ENCODE measurements at regions of chr3 and their contacts with region 1.

Region 1: GRCh38 chr3:31132132-31132769 is 237.8 kb upstream of the GADL1 start:
- DNase-seq: no peak
- H3K4me3 Mint-ChIP-seq: no peak overlapping the region
- H3K27ac Mint-ChIP-seq: no peak overlapping the region
- H3K4me1 Mint-ChIP-seq: peaks cover 3% of the 10 kb centered on the region
- H3K27me3 Mint-ChIP-seq: peaks cover 6% of the 10 kb centered on the region

Region 2: GRCh38 chr3:30768703-30769685 is 363.3 kb before region 1 on chr3:
- intact Hi-C with region 1: loop called (anchors 1 kb)
- DNase-seq: peak; percentile 44
- H3K4me3 Mint-ChIP-seq: no peak overlapping the region
- H3K27ac Mint-ChIP-seq: no peak overlapping the region
- H3K4me1 Mint-ChIP-seq: peaks cover 5% of the 10 kb centered on the region
- H3K27me3 Mint-ChIP-seq: peaks cover 40% of the 10 kb centered on the region

Region 3: DNA sequence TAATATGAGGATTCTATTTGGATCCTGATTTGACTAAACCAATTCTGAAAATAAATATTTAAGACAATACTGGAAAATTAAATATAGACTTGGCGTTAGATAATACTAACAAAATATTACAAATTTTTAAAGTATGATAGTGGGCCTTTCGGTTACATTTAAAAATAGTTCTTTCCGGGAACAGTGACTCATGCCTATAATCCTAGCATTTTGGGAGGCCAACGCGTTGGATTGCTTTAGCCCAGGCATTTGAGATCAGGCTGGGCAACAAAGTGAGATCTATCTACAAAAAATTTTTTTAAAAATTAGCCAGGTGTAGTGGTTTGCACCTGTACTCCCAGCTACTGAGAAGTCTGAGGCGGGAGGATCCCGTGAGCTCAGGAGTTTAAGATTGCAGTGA is 207.5 kb before region 1 on chr3:
- intact Hi-C with region 1: loop called (anchors 5 kb)
- DNase-seq: no peak
- H3K4me3 Mint-ChIP-seq: no peak overlapping the region
- H3K27ac Mint-ChIP-seq: no peak overlapping the region
- H3K4me1 Mint-ChIP-seq: peaks cover 2% of the 10 kb centered on the region
- H3K27me3 Mint-ChIP-seq: peaks cover 5% of the 10 kb centered on the region

Measured in activated T-helper 2 cell treated with anti-CD3 and anti-CD28 coated beads, Interferon-gamma antibody, Interleukin-2, Interleukin-4, amounts not matched to agents 10 μg/mL and 5 μg/mL and 100 μg/mL, durations not matched to agents 14 hours and 24 hours and 36 hours (primary cell).